GM12878 (cell line): ENCODE measurements at regions of chr4 and their contacts with region 1.

Region 1: GRCh38 chr4:152304220-152304619 is 231.7 kb downstream of the FBXW7 start:
- DNase-seq: peak; percentile 71
- ATAC-seq: peak; percentile 95
- H3K4me3 ChIP-seq: no peak overlapping the region
- H3K27ac ChIP-seq: peak overlapping the region; percentile 28; the same call in 1 of the 2 replicates
- H3K4me1 ChIP-seq: no peaks in the 10 kb centered on the region
- H3K27me3 ChIP-seq: no peaks in the 10 kb centered on the region
- CTCF ChIP-seq: no peak
- EP300 ChIP-seq: peak; percentile 61 to 78; a peak in 3 of 4 replicates
- POLR2A ChIP-seq: no peak
- RAD21 ChIP-seq: no peak

Region 2: DNA sequence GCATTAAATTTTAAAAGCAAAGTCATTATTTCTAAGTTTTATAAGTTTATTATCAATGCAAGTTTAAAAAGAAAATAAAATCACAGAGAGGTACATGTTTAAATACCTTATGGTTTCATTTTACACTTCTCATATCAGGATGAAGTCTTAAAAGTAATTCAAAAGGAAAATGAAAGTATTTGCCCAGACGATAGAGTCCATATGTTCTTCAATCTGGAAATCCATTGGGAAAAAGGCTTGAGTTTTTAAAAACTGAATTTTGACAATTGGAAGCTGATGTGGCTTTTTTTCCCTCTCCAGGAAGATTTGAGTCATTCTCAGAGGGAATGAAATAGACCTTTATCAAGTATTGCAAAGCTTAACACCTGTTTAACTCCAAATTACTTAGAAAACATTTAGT is 1685.2 kb before region 1 on chr4:
- CTCF ChIA-PET with region 1: no interaction called
- POLR2A ChIA-PET with region 1: no interaction called
- RAD21 ChIA-PET with region 1: no interaction called
- SMC1A ChIA-PET with region 1: no interaction called
- in situ Hi-C with region 1: no loop called
- intact Hi-C with region 1: no loop called
- DNase-seq: no peak
- ATAC-seq: peak; percentile 46; the same call in 2 of the 3 replicates
- H3K4me3 ChIP-seq: no peak overlapping the region; the same call in 1 of the 2 replicates
- H3K27ac ChIP-seq: no peak overlapping the region
- H3K4me1 ChIP-seq: no peaks in the 10 kb centered on the region
- H3K27me3 ChIP-seq: no peaks in the 10 kb centered on the region
- CTCF ChIP-seq: no peak
- EP300 ChIP-seq: no peak
- POLR2A ChIP-seq: no peak
- RAD21 ChIP-seq: no peak

Region 3: GRCh38 chr4:152063885-152064240 is 240.4 kb before region 1 on chr4:
- CTCF ChIA-PET with region 1: no interaction called
- POLR2A ChIA-PET with region 1: no interaction called
- RAD21 ChIA-PET with region 1: no interaction called
- SMC1A ChIA-PET with region 1: interaction called, 3 read pairs
- in situ Hi-C with region 1: no loop called
- intact Hi-C with region 1: loop called (anchors 10 kb)
- DNase-seq: no peak
- ATAC-seq: no peak; the same call in 2 of the 3 replicates
- H3K4me3 ChIP-seq: no peak overlapping the region
- H3K27ac ChIP-seq: no peak overlapping the region
- H3K4me1 ChIP-seq: no peaks in the 10 kb centered on the region
- H3K27me3 ChIP-seq: no peaks in the 10 kb centered on the region
- CTCF ChIP-seq: no peak
- EP300 ChIP-seq: no peak
- POLR2A ChIP-seq: no peak
- RAD21 ChIP-seq: no peak

Region 4: DNA sequence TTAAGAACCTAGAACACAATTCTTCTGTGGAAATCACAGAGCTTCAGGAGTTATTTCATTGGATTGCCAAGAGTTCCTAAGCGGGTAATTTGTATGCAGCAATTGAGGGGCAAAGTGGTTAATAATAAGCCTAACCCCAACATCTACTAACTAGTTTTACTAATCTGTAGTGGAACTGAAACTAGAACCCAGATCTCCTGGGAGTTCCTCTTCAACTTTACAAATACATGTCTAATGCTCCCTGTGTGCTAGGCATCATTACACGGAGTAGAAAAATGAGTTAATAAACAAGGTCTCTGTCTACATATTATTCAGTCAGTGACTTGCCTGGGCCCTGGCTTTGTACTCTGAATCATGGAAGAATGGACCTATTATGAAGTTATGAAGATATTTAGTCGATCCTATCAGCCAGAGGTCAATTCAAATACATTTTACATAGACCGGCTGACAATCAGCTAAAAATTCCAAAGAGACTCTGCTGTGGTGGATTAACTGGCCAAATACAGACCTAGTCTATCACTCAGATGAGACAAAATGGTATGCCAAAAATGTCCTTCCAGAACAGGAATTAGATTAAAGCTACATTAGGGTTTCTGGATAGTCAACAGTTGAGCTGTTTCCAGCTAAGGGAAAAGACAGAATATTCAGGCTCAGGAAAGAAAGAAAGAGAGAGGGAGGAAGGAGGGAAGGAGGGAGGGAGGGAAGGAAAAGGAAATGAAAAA is 94.3 kb before region 1 on chr4:
- CTCF ChIA-PET with region 1: interaction called, 3 read pairs
- POLR2A ChIA-PET with region 1: no interaction called
- RAD21 ChIA-PET with region 1: no interaction called
- SMC1A ChIA-PET with region 1: interaction called, 4 read pairs
- in situ Hi-C with region 1: no loop called
- intact Hi-C with region 1: loop called (anchors 1 kb)
- DNase-seq: peak; percentile 53
- ATAC-seq: peak; percentile 87
- H3K4me3 ChIP-seq: no peak overlapping the region
- H3K27ac ChIP-seq: no peak overlapping the region
- H3K4me1 ChIP-seq: no peaks in the 10 kb centered on the region
- H3K27me3 ChIP-seq: no peaks in the 10 kb centered on the region
- CTCF ChIP-seq: no peak
- EP300 ChIP-seq: peak in 1 of 2 experiments; percentile 62; a peak in 1 of 4 replicates
- POLR2A ChIP-seq: no peak
- RAD21 ChIP-seq: no peak

Region 5: DNA sequence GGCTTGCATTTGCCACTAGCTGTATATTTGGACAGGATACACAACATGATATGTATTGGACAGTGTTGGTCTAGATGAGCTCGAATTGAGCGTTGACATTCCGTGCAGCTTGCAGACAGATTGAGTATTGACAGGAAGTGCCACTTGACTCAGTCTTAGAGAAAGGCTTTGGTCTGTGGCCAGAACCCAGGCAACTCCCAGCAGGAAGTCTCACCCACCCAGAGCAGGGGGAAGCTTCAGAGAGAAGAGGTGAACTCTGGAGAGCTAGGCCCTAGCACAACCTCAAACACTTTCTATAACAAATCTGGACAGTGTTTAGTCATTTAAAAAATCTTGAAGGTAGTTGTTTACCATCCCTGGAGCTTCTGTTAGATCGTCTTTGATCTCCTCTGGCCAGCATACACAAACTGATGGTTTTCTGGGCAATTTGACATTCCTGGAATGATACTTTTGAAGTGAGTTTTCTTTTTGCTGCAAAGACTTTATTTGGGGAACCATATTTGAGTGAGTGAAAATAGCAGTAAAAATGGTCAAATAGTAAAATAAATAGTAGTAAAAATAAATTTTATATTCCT is 48.7 kb before region 1 on chr4:
- CTCF ChIA-PET with region 1: interaction called, 5 read pairs
- POLR2A ChIA-PET with region 1: interaction called, 3 read pairs
- RAD21 ChIA-PET with region 1: interaction called, 5 read pairs
- SMC1A ChIA-PET with region 1: interaction called, 9 read pairs
- in situ Hi-C with region 1: no loop called
- intact Hi-C with region 1: loop called (anchors 1 kb)
- DNase-seq: peak; percentile 63
- ATAC-seq: peak; percentile 94
- H3K4me3 ChIP-seq: no peak overlapping the region
- H3K27ac ChIP-seq: no peak overlapping the region
- H3K4me1 ChIP-seq: peaks cover 19% of the 10 kb centered on the region
- H3K27me3 ChIP-seq: no peaks in the 10 kb centered on the region
- CTCF ChIP-seq: no peak
- EP300 ChIP-seq: no peak
- POLR2A ChIP-seq: no peak
- RAD21 ChIP-seq: no peak

Region 6: GRCh38 chr4:152278505-152279233 is 25.6 kb before region 1 on chr4:
- CTCF ChIA-PET with region 1: no interaction called
- POLR2A ChIA-PET with region 1: no interaction called
- RAD21 ChIA-PET with region 1: interaction called, 28 read pairs
- SMC1A ChIA-PET with region 1: interaction called, 43 read pairs
- in situ Hi-C with region 1: no loop called
- intact Hi-C with region 1: loop called (anchors 1 kb)
- DNase-seq: peak; percentile 71
- ATAC-seq: peak; percentile 87
- H3K4me3 ChIP-seq: no peak overlapping the region
- H3K27ac ChIP-seq: no peak overlapping the region
- H3K4me1 ChIP-seq: no peaks in the 10 kb centered on the region
- H3K27me3 ChIP-seq: no peaks in the 10 kb centered on the region; a peak in 1 of 4 replicates
- CTCF ChIP-seq: no peak
- EP300 ChIP-seq: no peak; a peak in 1 of 4 replicates
- POLR2A ChIP-seq: no peak
- RAD21 ChIP-seq: no peak